Mammary epithelial cell (primary cell): ENCODE measurements at regions of chr9 and their contacts with region 1.

Region 1: GRCh38 chr9:105157130-105157583 is 87.3 kb upstream of the SLC44A1 start:
- DNase-seq: peak; percentile 60
- H3K4me3 ChIP-seq: no peak overlapping the region
- H3K27ac ChIP-seq: no peak overlapping the region
- H3K4me1 ChIP-seq: peaks cover 6% of the 10 kb centered on the region
- H3K27me3 ChIP-seq: no peaks in the 10 kb centered on the region
- CTCF ChIP-seq: peak; percentile 41 to 53

Region 2: DNA sequence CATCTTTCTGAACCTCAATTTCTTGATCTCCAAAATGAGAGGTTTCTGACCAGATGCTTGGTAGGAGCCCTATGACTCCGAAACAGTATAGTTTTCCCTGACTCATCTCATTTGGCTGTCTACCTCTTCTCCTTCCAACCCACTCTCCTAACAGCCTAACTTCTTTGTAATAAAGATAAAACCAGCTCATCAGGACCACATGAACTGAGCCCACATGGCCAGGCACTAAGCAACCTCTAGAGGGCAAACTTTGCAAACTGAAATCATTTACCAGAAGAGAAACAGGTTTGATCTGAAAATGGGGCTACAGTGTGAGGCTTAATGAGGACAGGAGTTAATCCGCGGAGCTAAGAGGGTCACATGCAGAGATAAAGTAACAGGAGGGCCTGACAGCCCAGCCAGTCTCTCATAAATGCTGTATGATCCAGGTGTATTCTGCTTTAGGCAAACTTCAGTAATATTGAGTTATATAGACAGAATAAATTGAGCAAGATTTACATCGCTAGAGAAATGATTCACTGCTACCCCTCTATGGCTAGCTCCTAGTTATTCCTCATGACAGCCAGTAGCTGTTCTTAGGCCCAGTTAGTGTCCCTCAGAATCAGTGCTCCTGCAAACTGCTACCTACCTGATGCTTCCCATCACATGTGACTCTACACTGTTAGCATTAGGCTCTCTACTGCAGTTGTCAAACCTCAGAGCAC is 293.8 kb before region 1 on chr9:
- CTCF ChIA-PET with region 1: no interaction called
- dilution Hi-C with region 1: no loop called
- in situ Hi-C with region 1: loop called (anchors 10 to 25 kb)
- intact Hi-C with region 1: loop called (anchors 1 kb)
- DNase-seq: peak; percentile 69
- H3K4me3 ChIP-seq: no peak overlapping the region
- H3K27ac ChIP-seq: no peak overlapping the region
- H3K4me1 ChIP-seq: peaks cover 27% of the 10 kb centered on the region
- H3K27me3 ChIP-seq: no peaks in the 10 kb centered on the region
- CTCF ChIP-seq: peak; percentile 85 to 94

Region 3: DNA sequence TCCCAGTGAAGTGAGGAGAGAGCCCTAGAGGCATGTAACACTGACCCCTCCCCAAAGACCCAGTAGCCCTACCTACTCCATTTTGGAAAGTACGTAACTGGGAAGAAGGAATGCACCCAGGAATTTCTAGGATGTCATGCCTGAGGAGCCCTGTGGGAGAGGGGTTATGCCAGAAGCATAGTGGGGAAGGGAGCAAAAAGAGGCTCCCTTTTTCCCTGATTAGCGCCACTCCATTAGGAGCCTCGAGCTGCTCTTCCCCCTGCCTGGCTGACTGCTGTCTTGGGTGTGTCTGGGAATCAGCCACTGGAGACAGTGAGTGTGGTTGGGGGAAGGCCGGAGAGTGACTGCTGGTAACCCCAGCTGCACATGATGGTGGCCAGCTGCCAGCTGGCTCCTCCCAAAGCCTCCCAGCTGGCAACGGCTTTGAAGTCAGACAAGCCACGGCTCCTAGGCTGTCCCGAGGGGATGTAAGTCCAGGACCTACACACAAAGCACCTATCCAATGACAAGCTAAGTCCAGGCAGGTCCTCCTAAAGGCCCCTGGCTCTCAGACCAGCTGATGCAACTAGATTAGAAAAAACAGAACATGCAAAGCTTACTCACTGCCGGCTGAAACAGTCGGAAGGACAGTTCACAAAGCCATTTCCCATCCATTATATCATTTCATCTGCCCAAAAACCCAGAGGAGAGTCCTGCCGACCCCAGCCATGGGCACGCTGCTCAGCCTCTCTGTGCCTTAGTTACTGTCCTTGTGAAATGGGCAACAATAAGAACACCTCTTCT is 92.7 kb before region 1 on chr9:
- CTCF ChIA-PET with region 1: no interaction called
- dilution Hi-C with region 1: no loop called
- in situ Hi-C with region 1: no loop called
- intact Hi-C with region 1: loop called (anchors 5 kb)
- DNase-seq: peak; percentile 97
- H3K4me3 ChIP-seq: no peak overlapping the region
- H3K27ac ChIP-seq: peak overlapping the region; percentile 88
- H3K4me1 ChIP-seq: peaks cover 38% of the 10 kb centered on the region
- H3K27me3 ChIP-seq: no peaks in the 10 kb centered on the region
- CTCF ChIP-seq: no peak

Region 4: DNA sequence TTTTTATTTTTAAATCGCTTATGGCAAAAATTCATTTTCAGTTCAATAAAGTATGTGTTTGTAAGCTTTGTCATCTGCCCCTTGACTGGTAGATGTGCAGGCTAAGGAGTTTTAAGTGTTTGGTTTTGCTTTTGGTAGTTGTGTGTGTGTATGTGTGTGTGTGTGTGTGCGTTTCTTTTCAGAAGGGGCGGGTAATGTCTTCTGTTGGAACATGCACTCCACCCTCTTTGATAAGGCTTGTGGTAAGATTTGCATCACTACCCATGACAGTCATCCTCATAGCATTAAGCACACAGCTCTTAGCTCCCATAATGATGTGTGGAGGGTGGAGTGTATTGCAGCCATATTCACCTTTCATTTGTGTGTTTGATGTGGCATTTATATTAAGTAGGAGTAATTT is 198.6 kb after region 1 on chr9:
- CTCF ChIA-PET with region 1: no interaction called
- dilution Hi-C with region 1: no loop called
- in situ Hi-C with region 1: no loop called
- intact Hi-C with region 1: loop called (anchors 1 kb)
- DNase-seq: peak; percentile 60
- H3K4me3 ChIP-seq: no peak overlapping the region
- H3K27ac ChIP-seq: no peak overlapping the region
- H3K4me1 ChIP-seq: no peaks in the 10 kb centered on the region
- H3K27me3 ChIP-seq: no peaks in the 10 kb centered on the region
- CTCF ChIP-seq: peak in 1 of 2 donors; percentile 18